Colonic mucosa (tissue), 4 donors: ENCODE measurements at regions of chr6 and their contacts with region 1.

Region 1: DNA sequence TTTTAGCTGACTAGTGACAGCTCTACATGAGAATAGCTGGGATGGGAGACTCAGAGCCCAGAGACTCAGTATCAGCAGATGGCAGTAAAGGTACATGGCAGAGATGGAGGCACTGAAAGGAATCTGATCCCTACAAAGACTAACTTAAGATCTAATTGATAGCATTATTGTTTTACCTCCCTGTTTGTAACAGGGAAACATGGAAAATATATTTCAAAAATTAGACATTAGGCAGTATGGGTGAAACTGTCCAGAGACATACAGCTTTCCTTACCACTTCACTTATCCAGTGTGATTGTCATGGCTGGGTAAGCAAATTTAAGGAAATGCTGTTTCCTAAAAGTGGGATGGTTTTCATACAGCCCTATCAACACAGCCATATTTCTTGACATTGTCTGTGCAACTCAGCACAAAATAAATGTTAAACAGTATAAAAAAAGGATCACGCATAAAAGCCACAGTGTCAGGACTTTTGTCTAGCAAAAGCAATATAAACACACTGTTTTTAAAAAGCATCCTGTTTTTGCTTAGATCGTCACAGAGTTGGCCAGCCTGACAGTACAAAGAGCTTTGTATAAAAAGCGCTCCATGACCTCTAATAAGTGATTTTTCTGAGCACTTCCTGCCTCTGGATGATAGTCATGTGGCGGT is 376.9 kb downstream of the PHF3 start:
- DNase-seq: peak; percentile 51
- H3K4me3 ChIP-seq: no peak overlapping the region
- H3K27ac ChIP-seq: no peak overlapping the region
- H3K4me1 ChIP-seq: no peaks in the 10 kb centered on the region
- H3K27me3 ChIP-seq: no peaks in the 10 kb centered on the region
- CTCF ChIP-seq: peak; percentile 68

Region 2: DNA sequence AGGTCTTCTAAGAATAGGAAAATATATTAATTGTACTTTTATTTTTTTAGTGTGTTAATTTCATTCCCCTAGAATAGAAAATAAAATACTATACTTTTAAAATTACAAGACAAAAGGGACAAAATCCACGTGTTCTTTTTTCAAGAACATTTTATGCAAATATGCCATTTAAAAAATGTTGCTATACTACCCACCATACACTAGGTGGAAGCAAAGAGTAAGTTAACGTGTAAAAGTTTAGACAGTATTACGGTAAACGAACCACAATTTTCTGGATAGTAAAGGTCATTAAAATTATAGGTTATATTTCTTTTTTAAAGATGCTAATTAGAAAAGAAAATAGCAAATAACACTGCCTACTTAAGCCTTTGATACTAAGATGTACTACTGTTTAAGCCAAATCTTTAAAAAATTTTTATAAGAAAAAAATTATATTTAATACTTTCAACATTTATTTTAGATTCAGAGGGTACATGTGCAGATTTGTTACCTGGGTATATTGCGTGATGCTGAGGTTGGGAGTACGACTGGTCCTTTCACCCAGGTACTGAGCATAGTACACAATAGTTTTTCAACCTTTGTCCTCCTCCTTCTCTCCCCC is 89.2 kb before region 1 on chr6:
- intact Hi-C with region 1: loop called (anchors 5 kb)
- DNase-seq: no peak
- H3K4me3 ChIP-seq: no peak overlapping the region
- H3K27ac ChIP-seq: no peak overlapping the region
- H3K4me1 ChIP-seq: no peaks in the 10 kb centered on the region
- H3K27me3 ChIP-seq: no peaks in the 10 kb centered on the region
- CTCF ChIP-seq: peak; percentile 65

Region 3: DNA sequence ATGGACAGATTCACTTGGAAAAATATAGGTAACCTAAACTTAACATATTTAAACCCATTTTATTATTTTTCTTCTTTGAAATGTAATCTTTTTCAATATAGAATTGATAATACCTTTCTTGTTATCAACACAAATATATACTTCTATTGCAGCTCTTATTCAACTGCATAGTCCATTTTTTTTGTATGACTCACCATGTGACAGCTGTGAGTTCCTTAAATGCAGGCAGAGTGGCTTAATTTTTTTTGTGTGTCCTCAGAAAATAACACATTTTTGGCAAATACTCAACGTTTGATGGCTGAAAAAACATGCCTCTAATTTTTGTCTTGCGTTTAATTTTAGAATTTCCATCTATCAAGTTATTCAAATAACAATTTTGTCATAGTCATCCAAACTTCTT is 77.9 kb after region 1 on chr6:
- intact Hi-C with region 1: no loop called
- DNase-seq: no peak
- H3K4me3 ChIP-seq: no peak overlapping the region
- H3K27ac ChIP-seq: no peak overlapping the region
- H3K4me1 ChIP-seq: no peaks in the 10 kb centered on the region
- H3K27me3 ChIP-seq: no peaks in the 10 kb centered on the region
- CTCF ChIP-seq: no peak

Region 4: DNA sequence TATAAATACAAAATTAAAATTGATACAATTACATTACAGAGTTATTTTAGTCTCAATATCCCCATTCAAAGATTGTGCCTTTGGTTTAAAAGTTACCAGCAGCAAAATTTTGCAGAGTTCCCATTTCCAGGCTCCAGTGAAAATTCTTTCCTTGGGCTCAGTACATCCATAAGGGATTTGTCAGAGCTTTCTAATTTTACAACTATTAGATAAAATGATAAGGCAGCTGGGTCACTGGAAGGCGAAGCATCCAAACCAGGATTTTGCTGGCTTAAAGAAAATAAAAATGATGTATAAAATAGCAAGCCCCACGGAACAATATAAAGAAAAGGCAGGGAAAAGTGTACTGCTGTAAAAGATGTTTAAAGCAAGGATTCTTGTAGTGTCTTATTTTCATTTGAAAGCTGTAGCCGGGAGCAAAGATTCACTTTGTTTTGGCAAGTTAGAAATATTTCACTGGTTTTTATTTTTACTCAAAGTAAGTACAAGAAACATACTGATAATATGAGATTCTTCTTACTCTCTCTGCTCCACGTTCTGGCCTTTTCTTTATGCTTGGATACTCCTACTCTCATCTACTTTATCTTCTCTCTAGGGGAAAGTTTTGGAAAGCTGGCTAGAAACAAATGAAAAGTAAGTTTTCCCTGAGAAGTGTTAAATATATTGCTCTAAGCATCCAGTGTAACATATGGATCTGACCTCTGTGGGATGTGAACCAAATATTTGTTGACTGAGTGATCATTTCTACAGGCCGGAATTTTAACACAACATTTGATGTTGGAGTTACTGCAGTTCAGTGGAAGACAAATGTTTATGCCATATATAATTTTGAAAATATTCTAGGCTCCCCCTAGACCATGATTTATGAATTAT is 111.5 kb after region 1 on chr6:
- intact Hi-C with region 1: no loop called
- DNase-seq: no peak
- H3K4me3 ChIP-seq: no peak overlapping the region
- H3K27ac ChIP-seq: no peak overlapping the region
- H3K4me1 ChIP-seq: no peaks in the 10 kb centered on the region
- H3K27me3 ChIP-seq: no peaks in the 10 kb centered on the region
- CTCF ChIP-seq: no peak